ENCODE measurements at regions of chr11 and their contacts with region 1.

Region 1: GRCh38 chr11:67630228-67630942 is 648 bp upstream of the NUDT8 start:
- DNase-seq: peak; percentile 94
- H3K4me3 Mint-ChIP-seq: peak overlapping the region; percentile 84
- H3K27ac Mint-ChIP-seq: peak overlapping the region; percentile 92
- H3K4me1 Mint-ChIP-seq: peaks cover 7% of the 10 kb centered on the region
- H3K27me3 Mint-ChIP-seq: peaks cover 3% of the 10 kb centered on the region

Region 2: GRCh38 chr11:67583247-67584204 is 46.9 kb before region 1 on chr11 and contains the start of gene GSTP1:
- intact Hi-C with region 1: loop called (anchors 1 kb)
- DNase-seq: peak; percentile 74
- H3K4me3 Mint-ChIP-seq: peak within 1 kb of the TSS; percentile 90
- H3K27ac Mint-ChIP-seq: peak within 1 kb of the TSS; percentile 87
- H3K4me1 Mint-ChIP-seq: peaks cover 47% of the 10 kb centered on the region
- H3K27me3 Mint-ChIP-seq: peaks cover 18% of the 10 kb centered on the region
- total RNA-seq, gene GSTP1: 278 and 289 TPM in 2 replicates

Region 3: GRCh38 chr11:67606492-67607201 is 23.7 kb before region 1 on chr11 and contains the start of gene NDUFV1:
- intact Hi-C with region 1: loop called (anchors 1 kb)
- DNase-seq: peak; percentile 97
- H3K4me3 Mint-ChIP-seq: peak within 1 kb of the TSS; percentile 94
- H3K27ac Mint-ChIP-seq: peak within 1 kb of the TSS; percentile 97
- H3K4me1 Mint-ChIP-seq: peaks cover 26% of the 10 kb centered on the region
- H3K27me3 Mint-ChIP-seq: peaks cover 7% of the 10 kb centered on the region
- total RNA-seq, gene NDUFV1: 289 and 303 TPM in 2 replicates

Region 4: GRCh38 chr11:67613960-67614715 is 16.2 kb before region 1 on chr11:
- intact Hi-C with region 1: loop called (anchors 1 kb)
- DNase-seq: peak; percentile 86
- H3K4me3 Mint-ChIP-seq: peak overlapping the region; percentile 79
- H3K27ac Mint-ChIP-seq: peak overlapping the region; percentile 98
- H3K4me1 Mint-ChIP-seq: peaks cover 29% of the 10 kb centered on the region
- H3K27me3 Mint-ChIP-seq: no peaks in the 10 kb centered on the region

Region 5: DNA sequence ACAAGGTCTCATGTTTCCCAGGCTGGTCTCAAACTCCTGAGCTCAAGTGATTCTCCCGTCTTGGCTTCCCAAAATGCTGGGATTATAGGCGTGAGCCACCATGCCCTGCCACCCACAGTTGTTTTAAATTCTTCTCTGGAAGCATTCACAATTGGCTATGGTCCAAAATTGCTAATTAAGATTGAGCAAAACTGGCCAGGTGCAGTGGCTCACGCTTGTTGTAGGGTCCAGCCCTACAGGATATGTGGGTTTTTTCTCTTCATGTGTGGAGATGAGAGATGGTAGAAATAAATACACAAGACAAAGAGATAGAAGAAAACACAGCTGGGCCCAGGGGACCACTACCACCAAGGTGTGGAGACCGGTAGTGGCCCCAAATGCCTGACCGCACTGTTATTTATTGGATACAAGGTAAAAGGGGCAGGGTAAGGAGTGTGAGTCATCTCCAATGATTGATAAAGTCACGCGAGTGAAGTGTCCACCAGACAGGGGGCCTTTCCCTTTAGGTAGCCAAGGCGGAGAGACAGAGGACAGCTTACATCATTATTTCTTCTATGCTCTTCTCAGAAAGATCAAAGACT is 28.4 kb after region 1 on chr11:
- intact Hi-C with region 1: loop called (anchors 1 kb)
- DNase-seq: no peak
- H3K4me3 Mint-ChIP-seq: no peak overlapping the region
- H3K27ac Mint-ChIP-seq: no peak overlapping the region
- H3K4me1 Mint-ChIP-seq: peaks cover 4% of the 10 kb centered on the region
- H3K27me3 Mint-ChIP-seq: peaks cover 6% of the 10 kb centered on the region

Region 6: DNA sequence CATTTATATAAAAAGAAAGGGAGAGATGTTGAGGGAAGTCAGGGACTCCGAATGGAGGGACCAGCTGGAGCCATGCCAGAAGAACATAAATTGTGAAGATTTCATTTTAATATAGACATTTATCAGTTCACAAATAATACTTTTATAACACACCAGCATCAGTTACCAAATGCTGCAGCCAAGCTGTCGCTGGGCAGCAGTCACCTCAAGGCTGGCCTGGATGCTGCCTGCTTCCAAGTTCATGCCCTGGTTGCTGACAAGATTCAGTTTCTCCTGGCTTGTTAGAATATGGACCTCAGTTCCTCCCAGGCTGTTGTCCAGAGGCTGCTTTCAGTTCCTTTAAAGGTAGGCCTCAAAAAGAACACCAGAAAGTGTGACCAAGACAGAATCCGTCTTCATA is 74.9 kb after region 1 on chr11:
- intact Hi-C with region 1: loop called (anchors 5 kb)
- DNase-seq: no peak
- H3K4me3 Mint-ChIP-seq: no peak overlapping the region
- H3K27ac Mint-ChIP-seq: no peak overlapping the region
- H3K4me1 Mint-ChIP-seq: no peaks in the 10 kb centered on the region
- H3K27me3 Mint-ChIP-seq: peaks cover 6% of the 10 kb centered on the region

Region 7: GRCh38 chr11:68030318-68031138 is 400.1 kb after region 1 on chr11 and contains the start of gene NDUFS8:
- intact Hi-C with region 1: loop called (anchors 1 kb)
- DNase-seq: peak; percentile 96
- H3K4me3 Mint-ChIP-seq: peak within 1 kb of the TSS; percentile 92
- H3K27ac Mint-ChIP-seq: peak within 1 kb of the TSS; percentile 82
- H3K4me1 Mint-ChIP-seq: peaks cover 20% of the 10 kb centered on the region
- H3K27me3 Mint-ChIP-seq: peaks cover 1% of the 10 kb centered on the region
- total RNA-seq, gene NDUFS8: 137 and 144 TPM in 2 replicates

Region 8: GRCh38 chr11:68213555-68214174 is 583.3 kb after region 1 on chr11:
- intact Hi-C with region 1: no loop called
- DNase-seq: peak; percentile 76
- H3K4me3 Mint-ChIP-seq: peak overlapping the region; percentile 64
- H3K27ac Mint-ChIP-seq: no peak overlapping the region
- H3K4me1 Mint-ChIP-seq: peaks cover 44% of the 10 kb centered on the region
- H3K27me3 Mint-ChIP-seq: peaks cover 20% of the 10 kb centered on the region

Measured in activated T-helper 1 cell treated with anti-CD3 and anti-CD28 coated beads, Interleukin-12 subunit alpha, Interleukin-12 subunit beta, Interleukin-2, Interleukin-4 antibody, amounts not matched to agents 30 ng/mL and 10 ng/mL and 1 ng/mL, durations not matched to agents 14 hours and 24 hours and 36 hours (primary cell).